ENCODE measurements at regions of chr2 and their contacts with region 1.

Region 1: GRCh38 chr2:171922230-171923022 is at the start of gene HAT1:
- DNase-seq: peak; percentile 98
- ATAC-seq: peak; percentile 91
- H3K4me3 Mint-ChIP-seq: peak within 1 kb of the TSS; percentile 91
- H3K27ac Mint-ChIP-seq: peak within 1 kb of the TSS; percentile 96
- H3K4me1 Mint-ChIP-seq: peaks cover 37% of the 10 kb centered on the region
- H3K27me3 Mint-ChIP-seq: no peaks in the 10 kb centered on the region
- total RNA-seq, gene HAT1: 75.5 to 77.3 TPM

Region 2: GRCh38 chr2:171893824-171894611 is 28.4 kb before region 1 on chr2 and contains the start of gene SLC25A12:
- CTCF ChIA-PET with region 1: interaction called, 3 read pairs
- POLR2A ChIA-PET with region 1: interaction called, 23 read pairs
- DNase-seq: peak; percentile 81
- ATAC-seq: peak; percentile 98
- H3K4me3 Mint-ChIP-seq: peak within 1 kb of the TSS; percentile 96
- H3K27ac Mint-ChIP-seq: peak within 1 kb of the TSS; percentile 87
- H3K4me1 Mint-ChIP-seq: peaks cover 28% of the 10 kb centered on the region
- H3K27me3 Mint-ChIP-seq: no peaks in the 10 kb centered on the region
- total RNA-seq, gene SLC25A12: 27.4 to 28.9 TPM